Endothelial cell of umbilical vein (primary cell): ENCODE measurements at regions of chr18 and their contacts with region 1.

Region 1: DNA sequence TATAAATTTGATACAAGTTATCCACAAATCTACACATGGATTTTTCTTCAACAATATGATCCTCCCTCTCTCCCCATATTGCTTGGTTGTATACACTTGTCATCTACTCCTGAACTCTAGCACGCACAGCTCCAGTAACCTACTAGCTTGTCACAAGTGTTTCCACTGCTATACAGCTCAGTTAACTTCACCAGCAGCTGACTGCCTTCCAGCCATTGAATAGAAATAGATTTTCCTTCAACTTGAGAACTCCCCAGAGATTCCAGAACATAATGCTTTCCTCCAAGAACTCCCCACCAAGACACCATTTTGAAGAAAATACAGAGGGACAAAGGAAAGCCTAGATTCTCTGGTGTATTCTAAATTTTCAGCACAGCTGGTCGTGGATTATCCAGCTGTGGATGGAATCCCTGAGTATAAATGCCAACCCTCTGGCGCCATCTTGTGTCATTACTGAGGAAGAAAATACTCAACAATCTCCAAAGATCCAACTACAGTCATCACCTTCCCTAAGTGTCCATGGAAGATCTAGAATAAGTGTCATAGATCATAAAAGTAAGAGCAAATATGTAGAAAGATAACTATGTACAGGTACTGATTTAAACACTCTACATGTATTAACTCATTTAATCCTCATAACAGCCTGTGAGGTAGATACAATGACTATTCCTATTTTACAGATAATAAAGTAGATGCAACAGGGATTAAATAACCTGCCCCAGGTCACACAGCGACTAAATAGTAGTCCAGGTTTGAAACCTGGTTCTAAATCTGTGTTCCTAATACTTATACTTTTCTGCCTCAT is 156.7 kb downstream of the ARHGAP28 start:
- DNase-seq: peak; percentile 62
- H3K4me3 ChIP-seq: no peak overlapping the region
- H3K27ac ChIP-seq: no peak overlapping the region
- H3K4me1 ChIP-seq: peaks cover 2% of the 10 kb centered on the region
- H3K27me3 ChIP-seq: no peaks in the 10 kb centered on the region
- CTCF ChIP-seq: peak; percentile 52 to 55
- POLR2A ChIP-seq: no peak

Region 2: DNA sequence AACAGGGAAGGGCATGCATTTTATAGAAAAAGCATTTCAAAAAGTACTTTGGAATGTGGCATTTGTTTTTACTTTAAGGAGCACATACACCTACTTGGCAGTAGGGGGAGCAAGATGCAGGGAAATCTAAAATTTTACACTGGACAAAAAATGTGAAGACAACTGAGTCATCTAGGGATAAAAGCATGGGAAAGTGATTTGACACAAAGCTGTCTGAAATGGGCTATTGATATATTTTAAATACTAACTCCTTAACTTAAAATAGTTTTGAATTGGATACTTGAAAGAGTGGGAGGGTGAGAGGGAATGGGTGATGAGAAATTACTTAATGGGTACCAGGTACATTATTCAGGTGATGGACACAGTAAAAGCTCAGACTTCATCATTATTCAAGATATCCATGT is 1006.7 kb before region 1 on chr18:
- CTCF ChIA-PET with region 1: interaction called, 13 read pairs
- POLR2A ChIA-PET with region 1: no interaction called
- dilution Hi-C with region 1: no loop called
- intact Hi-C with region 1: loop called (anchors 2 kb)
- DNase-seq: peak; percentile 36
- H3K4me3 ChIP-seq: no peak overlapping the region
- H3K27ac ChIP-seq: no peak overlapping the region
- H3K4me1 ChIP-seq: no peaks in the 10 kb centered on the region
- H3K27me3 ChIP-seq: no peaks in the 10 kb centered on the region
- CTCF ChIP-seq: peak; percentile 50 to 56
- POLR2A ChIP-seq: no peak

Region 3: DNA sequence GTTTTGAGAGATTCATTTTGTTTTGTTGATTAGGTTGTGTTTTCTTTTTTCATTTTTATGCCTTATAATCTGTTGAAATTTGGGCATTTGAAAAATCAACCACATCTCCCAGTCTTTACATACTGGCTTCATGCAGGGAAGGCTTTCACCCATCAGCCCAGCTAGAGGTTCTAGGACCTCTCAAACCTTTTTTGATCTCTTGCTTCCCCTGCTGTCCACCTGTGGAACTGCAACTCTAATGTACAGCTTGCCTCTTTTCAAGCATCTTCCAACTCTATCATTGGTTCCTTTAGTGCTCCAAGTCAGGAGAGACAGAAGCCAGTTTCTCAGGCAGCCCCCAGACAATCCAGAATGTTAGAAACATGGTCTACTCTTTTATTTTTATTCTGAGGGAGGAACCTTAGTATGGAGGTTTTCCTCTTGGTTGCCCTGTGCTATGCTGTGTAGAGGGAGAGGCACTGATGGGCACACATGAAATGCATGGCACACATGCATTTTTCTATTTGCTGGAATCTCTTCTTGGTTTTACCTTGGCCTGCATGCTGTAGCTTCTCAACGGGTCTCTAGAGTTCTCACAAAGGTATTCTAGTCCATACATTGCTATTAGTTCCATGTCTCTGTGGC is 364.3 kb before region 1 on chr18:
- CTCF ChIA-PET with region 1: interaction called, 21 read pairs
- POLR2A ChIA-PET with region 1: no interaction called
- dilution Hi-C with region 1: loop called (anchors 25 kb)
- intact Hi-C with region 1: loop called (anchors 1 kb)
- DNase-seq: peak; percentile 52
- H3K4me3 ChIP-seq: no peak overlapping the region
- H3K27ac ChIP-seq: no peak overlapping the region
- H3K4me1 ChIP-seq: no peaks in the 10 kb centered on the region
- H3K27me3 ChIP-seq: no peaks in the 10 kb centered on the region
- CTCF ChIP-seq: peak; percentile 68 to 79
- POLR2A ChIP-seq: no peak

Region 4: GRCh38 chr18:6543330-6543908 is 342.8 kb before region 1 on chr18:
- CTCF ChIA-PET with region 1: interaction called, 253 read pairs
- POLR2A ChIA-PET with region 1: no interaction called
- dilution Hi-C with region 1: loop called (anchors 25 kb)
- intact Hi-C with region 1: loop called (anchors 1 kb)
- DNase-seq: peak; percentile 60
- H3K4me3 ChIP-seq: no peak overlapping the region
- H3K27ac ChIP-seq: no peak overlapping the region
- H3K4me1 ChIP-seq: peaks cover 9% of the 10 kb centered on the region
- H3K27me3 ChIP-seq: no peaks in the 10 kb centered on the region
- CTCF ChIP-seq: peak; percentile 23 to 26
- POLR2A ChIP-seq: no peak

Region 5: DNA sequence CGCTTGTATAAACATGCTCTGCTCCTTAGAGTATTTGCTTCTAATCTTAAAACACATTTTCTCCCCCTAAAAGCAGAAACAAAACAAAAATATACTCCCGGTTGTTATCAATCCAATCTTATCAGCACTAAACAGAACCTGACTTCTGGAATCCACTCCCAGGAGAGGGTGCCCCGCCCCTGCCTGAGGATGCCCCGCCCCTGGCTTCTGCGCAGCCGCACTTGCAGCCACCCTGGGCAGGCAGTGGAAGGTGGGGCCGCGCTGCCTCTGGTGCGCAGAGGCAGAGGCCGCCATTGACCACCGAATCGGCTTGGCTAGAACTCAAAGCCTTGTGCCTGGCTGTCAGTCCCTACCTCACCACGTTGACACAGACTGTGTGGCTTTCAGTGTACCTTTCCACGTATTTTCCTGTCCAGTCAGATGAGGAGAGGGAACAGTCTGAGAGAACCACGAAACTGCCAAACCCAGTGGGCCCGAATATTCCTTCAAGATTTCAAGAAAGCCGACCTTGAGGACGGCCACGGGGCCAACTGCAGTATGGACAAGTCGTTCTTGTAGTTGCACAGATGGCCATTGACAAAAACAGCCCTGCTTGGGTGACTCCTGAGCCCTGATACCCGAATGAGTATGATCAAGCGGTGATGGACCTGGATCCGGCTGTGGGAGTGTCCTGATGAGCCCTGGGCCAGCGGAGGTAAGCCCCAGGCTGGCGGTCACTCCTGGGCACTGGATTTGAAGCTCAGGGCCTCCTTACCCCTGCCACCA is 202.9 kb before region 1 on chr18:
- CTCF ChIA-PET with region 1: no interaction called
- POLR2A ChIA-PET with region 1: no interaction called
- dilution Hi-C with region 1: no loop called
- intact Hi-C with region 1: loop called (anchors 5 kb)
- DNase-seq: peak; percentile 57
- H3K4me3 ChIP-seq: no peak overlapping the region
- H3K27ac ChIP-seq: no peak overlapping the region
- H3K4me1 ChIP-seq: no peaks in the 10 kb centered on the region
- H3K27me3 ChIP-seq: peaks cover 0 to 3% of the 10 kb centered on the region in 2 experiments
- CTCF ChIP-seq: no peak
- POLR2A ChIP-seq: no peak

Region 6: GRCh38 chr18:6741232-6741663 is 144.9 kb before region 1 on chr18:
- CTCF ChIA-PET with region 1: interaction called, 17 read pairs
- POLR2A ChIA-PET with region 1: no interaction called
- dilution Hi-C with region 1: no loop called
- intact Hi-C with region 1: no loop called
- DNase-seq: peak; percentile 97
- H3K4me3 ChIP-seq: no peak overlapping the region
- H3K27ac ChIP-seq: peak overlapping the region; percentile 85
- H3K4me1 ChIP-seq: peaks cover 22% of the 10 kb centered on the region
- H3K27me3 ChIP-seq: no peaks in the 10 kb centered on the region
- CTCF ChIP-seq: no peak
- POLR2A ChIP-seq: no peak

Region 7: DNA sequence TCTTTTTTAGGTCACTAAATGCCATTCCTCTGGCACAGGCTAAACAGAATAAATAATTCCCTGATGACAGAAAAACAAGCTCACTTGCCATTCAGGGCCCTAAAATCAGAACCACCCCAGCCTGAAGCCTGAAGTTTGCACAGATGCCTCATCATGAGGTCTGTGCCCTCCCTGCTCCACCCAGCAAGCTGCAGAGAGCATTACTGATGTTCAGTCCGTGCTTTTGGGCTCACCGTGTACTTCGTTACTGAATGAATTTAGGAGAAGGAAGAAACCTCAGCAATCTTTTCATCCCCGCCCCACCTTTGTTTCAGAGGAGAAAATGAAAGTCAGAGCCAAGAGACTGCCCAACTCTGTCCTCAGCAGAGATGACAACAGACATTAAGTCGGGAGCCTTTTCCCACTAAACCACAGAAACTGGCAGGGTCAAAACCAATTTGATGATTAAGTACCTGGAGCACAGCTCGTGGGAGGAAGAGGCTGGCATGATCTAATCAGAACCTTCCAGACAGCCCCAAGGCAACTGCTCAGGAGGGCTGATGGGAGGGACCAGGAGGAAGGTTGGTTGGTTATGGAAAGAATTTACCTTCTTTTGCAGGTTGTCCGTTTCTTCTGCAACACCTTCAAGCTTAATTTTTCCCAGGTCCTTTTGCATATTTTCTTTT is 108.7 kb after region 1 on chr18:
- CTCF ChIA-PET with region 1: no interaction called
- POLR2A ChIA-PET with region 1: no interaction called
- dilution Hi-C with region 1: no loop called
- intact Hi-C with region 1: no loop called
- DNase-seq: no peak
- H3K4me3 ChIP-seq: no peak overlapping the region
- H3K27ac ChIP-seq: no peak overlapping the region
- H3K4me1 ChIP-seq: no peaks in the 10 kb centered on the region
- H3K27me3 ChIP-seq: no peaks in the 10 kb centered on the region
- CTCF ChIP-seq: no peak
- POLR2A ChIP-seq: no peak